ENCODE measurements at regions of chr13 and their contacts with region 1.

Region 1: DNA sequence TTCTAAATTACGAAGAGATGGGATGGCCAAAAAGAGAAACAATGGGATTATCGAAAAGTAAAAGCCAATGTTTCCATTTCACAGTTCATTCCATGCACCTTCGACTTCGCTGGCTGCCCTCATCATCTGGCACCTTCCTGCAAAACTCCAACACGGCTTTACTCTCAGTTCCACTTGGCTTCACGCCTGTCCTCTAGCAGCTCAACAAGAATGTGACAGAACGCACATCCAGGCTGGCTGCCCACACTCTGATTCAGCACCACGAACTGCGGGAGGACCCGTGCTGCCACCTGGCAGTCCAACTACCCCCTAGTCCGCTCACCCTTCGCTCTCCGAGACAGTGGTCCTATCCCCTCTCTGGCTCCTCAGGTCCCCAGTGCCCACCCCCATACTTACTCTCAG is 11.7 kb downstream of the ATP7B start:
- DNase-seq: no peak
- H3K4me3 ChIP-seq: no peak overlapping the region
- H3K4me3 Mint-ChIP-seq: no peak overlapping the region
- H3K27ac ChIP-seq: no peak overlapping the region
- H3K27ac Mint-ChIP-seq: no peak overlapping the region
- H3K4me1 ChIP-seq: no peaks in the 10 kb centered on the region
- H3K4me1 Mint-ChIP-seq: no peaks in the 10 kb centered on the region
- H3K27me3 ChIP-seq: no peaks in the 10 kb centered on the region
- H3K27me3 Mint-ChIP-seq: peaks cover 6 to 30% of the 10 kb centered on the region in 2 donors

Region 2: DNA sequence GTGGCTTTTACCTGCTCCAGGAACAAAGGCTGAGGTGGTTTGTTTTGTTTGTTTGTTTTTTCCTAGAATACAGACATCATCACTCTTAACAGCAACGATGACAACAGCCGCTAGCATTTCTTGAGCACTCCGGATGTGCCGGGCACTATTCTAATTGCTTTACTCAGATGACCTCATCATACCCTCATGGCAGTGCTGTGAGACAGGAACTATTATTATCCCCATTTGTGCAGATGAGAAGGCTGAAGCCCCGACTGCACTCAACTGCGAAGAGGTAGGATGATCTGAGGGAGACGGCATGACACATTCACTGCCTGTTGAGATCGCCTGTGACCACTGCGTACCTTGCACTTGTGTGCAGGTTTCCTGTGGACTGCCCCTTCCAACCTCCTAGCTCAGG is 71.3 kb before region 1 on chr13:
- CTCF ChIA-PET with region 1: no interaction called
- POLR2A ChIA-PET with region 1: no interaction called
- DNase-seq: no peak
- H3K4me3 ChIP-seq: no peak overlapping the region
- H3K4me3 Mint-ChIP-seq: no peak overlapping the region
- H3K27ac ChIP-seq: no peak overlapping the region
- H3K27ac Mint-ChIP-seq: peak overlapping the region in 1 of 8 donors; percentile 16
- H3K4me1 ChIP-seq: no peaks in the 10 kb centered on the region
- H3K4me1 Mint-ChIP-seq: peaks cover 0 to 6% (median 0%) of the 10 kb centered on the region in 3 donors
- H3K27me3 ChIP-seq: no peaks in the 10 kb centered on the region
- H3K27me3 Mint-ChIP-seq: peaks cover 6 to 11% of the 10 kb centered on the region in 2 donors

Region 3: GRCh38 chr13:51959773-51960172 is 39.7 kb before region 1 on chr13:
- CTCF ChIA-PET with region 1: no interaction called
- POLR2A ChIA-PET with region 1: no interaction called
- DNase-seq: no peak
- H3K4me3 ChIP-seq: no peak overlapping the region
- H3K4me3 Mint-ChIP-seq: no peak overlapping the region
- H3K27ac ChIP-seq: no peak overlapping the region
- H3K27ac Mint-ChIP-seq: no peak overlapping the region
- H3K4me1 ChIP-seq: no peaks in the 10 kb centered on the region
- H3K4me1 Mint-ChIP-seq: peaks cover 0 to 23% (median 9%) of the 10 kb centered on the region in 3 donors
- H3K27me3 ChIP-seq: no peaks in the 10 kb centered on the region
- H3K27me3 Mint-ChIP-seq: peaks cover 0 to 5% of the 10 kb centered on the region in 2 donors

Region 4: GRCh38 chr13:52128714-52129700 is 129.5 kb after region 1 on chr13 and contains the start of gene NEK5:
- CTCF ChIA-PET with region 1: interaction called, 10 read pairs
- POLR2A ChIA-PET with region 1: no interaction called
- DNase-seq: peak; percentile 24 to 66 (median 50)
- H3K4me3 ChIP-seq: peak within 1 kb of the TSS; percentile 48
- H3K4me3 Mint-ChIP-seq: peak within 1 kb of the TSS; percentile 78 to 90 (median 84)
- H3K27ac ChIP-seq: no peak within 1 kb of the TSS
- H3K27ac Mint-ChIP-seq: peak within 1 kb of the TSS in 4 of 8 donors; percentile 1 to 35 (median 10)
- H3K4me1 ChIP-seq: peaks cover 18% of the 10 kb centered on the region
- H3K4me1 Mint-ChIP-seq: peaks cover 11 to 17% (median 13%) of the 10 kb centered on the region in 3 donors
- H3K27me3 ChIP-seq: no peaks in the 10 kb centered on the region
- H3K27me3 Mint-ChIP-seq: peaks cover 9 to 21% of the 10 kb centered on the region in 2 donors
- total RNA-seq, gene NEK5: not detected

Measured in CD8-positive, alpha-beta memory T cell (primary cell).